ENCODE measurements at regions of chr7 and their contacts with region 1.

Region 1: DNA sequence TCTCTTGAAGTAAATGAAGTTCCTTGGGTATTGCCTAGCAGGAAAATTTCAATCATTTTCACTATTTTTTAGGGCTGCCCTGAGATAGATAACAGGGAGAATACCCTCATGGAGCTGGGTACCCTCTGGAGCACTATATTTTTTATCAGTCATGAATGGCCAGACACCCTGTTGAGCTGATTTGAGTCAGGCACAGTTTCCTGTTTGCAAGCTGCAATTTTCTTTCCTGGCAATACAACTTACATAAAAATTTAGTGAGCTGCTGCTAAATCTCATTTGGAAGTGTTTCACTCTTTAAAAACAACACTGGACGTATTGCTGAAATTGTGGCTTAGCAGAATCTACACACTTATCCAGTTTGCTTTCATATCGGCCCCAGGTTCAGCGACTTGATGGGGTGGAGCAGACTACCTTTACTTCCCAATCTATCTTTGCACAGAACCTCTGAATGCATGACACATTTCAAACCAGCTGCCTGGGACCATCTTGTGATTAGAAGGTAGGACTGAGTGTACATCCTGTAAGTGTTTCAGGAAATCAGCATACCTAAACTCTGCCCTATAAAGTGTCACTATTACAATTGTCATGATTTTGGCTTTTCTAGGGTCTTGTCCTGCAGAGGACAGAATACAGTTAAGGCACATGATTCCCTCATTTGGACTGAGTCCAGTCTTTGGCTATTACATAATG is 125.7 kb upstream of the FAM3C start:
- DNase-seq: no peak
- ATAC-seq: no peak
- H3K4me3 ChIP-seq: no peak overlapping the region
- H3K27ac ChIP-seq: no peak overlapping the region
- H3K4me1 ChIP-seq: no peaks in the 10 kb centered on the region
- H3K27me3 ChIP-seq: no peaks in the 10 kb centered on the region
- CTCF ChIP-seq: no peak

Region 2: DNA sequence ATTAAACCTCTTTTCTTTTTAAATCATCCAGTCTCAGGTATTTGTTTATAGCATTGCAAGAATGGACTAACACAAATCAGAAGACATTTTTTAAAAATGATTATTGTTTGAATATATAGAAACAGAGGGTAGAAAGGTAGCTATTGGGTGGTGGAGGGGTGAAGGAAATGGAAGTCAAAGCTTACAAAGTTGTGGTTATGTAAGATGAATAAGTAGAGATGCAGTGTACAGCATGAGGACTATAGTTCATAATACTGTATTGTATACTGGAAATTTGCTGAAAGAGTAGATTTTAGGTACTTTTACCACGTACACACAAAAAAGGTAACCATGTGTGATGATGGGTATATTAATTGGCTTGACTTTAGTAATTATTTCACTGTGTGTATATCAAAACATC is 18.3 kb after region 1 on chr7:
- intact Hi-C with region 1: loop called in 1 of 10 experiments (anchors 1 kb)
- DNase-seq: no peak
- ATAC-seq: no peak
- H3K4me3 ChIP-seq: no peak overlapping the region
- H3K27ac ChIP-seq: no peak overlapping the region
- H3K4me1 ChIP-seq: peaks cover 0 to 11% (median 0%) of the 10 kb centered on the region in 9 donors
- H3K27me3 ChIP-seq: no peaks in the 10 kb centered on the region
- CTCF ChIP-seq: no peak

Region 3: GRCh38 chr7:122046354-122046753 is 524.5 kb after region 1 on chr7:
- intact Hi-C with region 1: no loop called
- DNase-seq: no peak
- ATAC-seq: no peak
- H3K4me3 ChIP-seq: no peak overlapping the region
- H3K27ac ChIP-seq: no peak overlapping the region
- H3K4me1 ChIP-seq: no peaks in the 10 kb centered on the region
- H3K27me3 ChIP-seq: no peaks in the 10 kb centered on the region
- CTCF ChIP-seq: no peak

Measured in heart right ventricle (tissue), 16 donors.